PC-3 (cell line): ENCODE measurements at regions of chrX and their contacts with region 1.

Region 1: DNA sequence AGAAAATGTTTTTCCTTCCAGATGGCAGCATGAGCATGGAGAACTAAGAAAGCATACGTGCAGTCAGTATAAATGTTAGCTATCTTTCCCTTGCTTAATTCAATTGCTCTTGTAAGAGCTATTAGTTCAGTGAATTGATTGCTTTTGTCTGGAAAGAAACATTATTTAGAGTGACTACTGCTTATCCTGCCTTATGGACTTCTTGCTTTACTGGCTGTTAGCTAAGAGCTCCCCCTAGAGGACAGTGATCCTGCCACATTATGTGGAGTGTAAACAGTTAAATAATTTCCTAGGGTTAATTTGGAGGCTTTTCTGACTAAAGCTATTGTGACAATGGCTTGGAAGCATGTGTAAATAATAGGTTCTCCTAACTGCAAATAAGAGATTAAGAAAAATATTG is 1402.4 kb downstream of the FAM133A start:
- DNase-seq: peak; percentile 58
- ATAC-seq: no peak
- H3K4me3 ChIP-seq: no peak overlapping the region
- H3K27ac ChIP-seq: no peak overlapping the region
- H3K4me1 ChIP-seq: no peaks in the 10 kb centered on the region
- H3K27me3 ChIP-seq: no peaks in the 10 kb centered on the region
- CTCF ChIP-seq: peak; percentile 64

Region 2: DNA sequence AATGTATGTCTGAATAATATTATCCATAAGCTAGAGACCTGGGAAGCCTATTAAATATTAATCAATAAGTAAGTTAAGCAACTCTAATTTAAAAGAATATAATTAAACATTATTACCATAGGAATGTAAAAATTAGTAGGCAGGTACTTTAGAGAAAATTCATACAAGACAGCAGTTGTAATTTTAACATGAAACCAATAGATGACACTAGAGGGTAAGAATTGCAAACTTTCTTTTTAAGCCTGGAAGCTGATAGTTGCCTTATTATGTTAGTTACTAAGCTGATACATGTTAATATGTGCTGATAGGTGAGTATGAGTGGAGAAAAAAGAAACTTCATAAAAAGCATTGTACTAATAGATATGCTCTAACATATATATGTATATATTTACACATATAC is 245.1 kb before region 1 on chrX:
- CTCF ChIA-PET with region 1: no interaction called
- POLR2A ChIA-PET with region 1: no interaction called
- intact Hi-C with region 1: loop called (anchors 5 kb)
- DNase-seq: peak; percentile 35
- ATAC-seq: no peak
- H3K4me3 ChIP-seq: no peak overlapping the region
- H3K27ac ChIP-seq: no peak overlapping the region
- H3K4me1 ChIP-seq: 0 out of 2 replicates have a peak, but pooled peaks cover 3% of the 10 kb centered on the region
- H3K27me3 ChIP-seq: no peaks in the 10 kb centered on the region
- CTCF ChIP-seq: peak; percentile 56

Region 3: DNA sequence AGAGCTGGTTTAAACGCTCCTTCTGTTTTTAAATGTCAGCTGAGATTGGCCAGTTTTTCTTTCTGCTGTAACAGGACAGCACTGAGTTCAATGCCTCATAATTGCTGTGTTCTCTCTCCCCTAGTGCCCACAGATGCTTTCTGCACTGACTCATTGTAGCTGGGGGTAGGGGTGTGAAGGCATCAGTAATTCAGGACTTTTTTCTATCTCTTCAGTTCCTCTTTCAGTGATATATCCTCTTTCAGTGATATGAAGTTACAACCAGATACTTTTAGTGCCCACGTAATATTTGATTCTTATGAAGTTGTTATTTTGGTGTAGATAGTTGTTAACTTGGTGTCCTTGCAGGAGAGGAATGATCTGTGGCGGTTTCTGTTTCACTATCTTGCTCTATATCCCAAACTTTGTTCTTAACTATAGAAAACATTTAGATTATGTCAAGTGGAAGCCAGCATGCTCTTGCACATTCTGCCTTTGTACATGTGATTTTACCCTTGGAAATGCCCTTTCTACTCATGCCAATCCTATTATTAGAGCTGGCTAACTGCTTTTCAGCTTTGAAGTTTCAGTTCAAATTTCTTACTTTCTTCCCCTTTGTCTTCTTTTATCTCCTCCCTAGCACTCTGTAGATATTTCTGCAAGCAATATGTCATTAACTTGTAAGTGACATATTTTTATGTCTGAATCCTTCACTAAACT is 144.0 kb before region 1 on chrX:
- CTCF ChIA-PET with region 1: no interaction called
- POLR2A ChIA-PET with region 1: no interaction called
- intact Hi-C with region 1: no loop called
- DNase-seq: no peak
- ATAC-seq: no peak
- H3K4me3 ChIP-seq: no peak overlapping the region
- H3K27ac ChIP-seq: no peak overlapping the region
- H3K4me1 ChIP-seq: no peaks in the 10 kb centered on the region
- H3K27me3 ChIP-seq: no peaks in the 10 kb centered on the region
- CTCF ChIP-seq: no peak